ENCODE measurements at regions of chr7 and their contacts with region 1.

Region 1: DNA sequence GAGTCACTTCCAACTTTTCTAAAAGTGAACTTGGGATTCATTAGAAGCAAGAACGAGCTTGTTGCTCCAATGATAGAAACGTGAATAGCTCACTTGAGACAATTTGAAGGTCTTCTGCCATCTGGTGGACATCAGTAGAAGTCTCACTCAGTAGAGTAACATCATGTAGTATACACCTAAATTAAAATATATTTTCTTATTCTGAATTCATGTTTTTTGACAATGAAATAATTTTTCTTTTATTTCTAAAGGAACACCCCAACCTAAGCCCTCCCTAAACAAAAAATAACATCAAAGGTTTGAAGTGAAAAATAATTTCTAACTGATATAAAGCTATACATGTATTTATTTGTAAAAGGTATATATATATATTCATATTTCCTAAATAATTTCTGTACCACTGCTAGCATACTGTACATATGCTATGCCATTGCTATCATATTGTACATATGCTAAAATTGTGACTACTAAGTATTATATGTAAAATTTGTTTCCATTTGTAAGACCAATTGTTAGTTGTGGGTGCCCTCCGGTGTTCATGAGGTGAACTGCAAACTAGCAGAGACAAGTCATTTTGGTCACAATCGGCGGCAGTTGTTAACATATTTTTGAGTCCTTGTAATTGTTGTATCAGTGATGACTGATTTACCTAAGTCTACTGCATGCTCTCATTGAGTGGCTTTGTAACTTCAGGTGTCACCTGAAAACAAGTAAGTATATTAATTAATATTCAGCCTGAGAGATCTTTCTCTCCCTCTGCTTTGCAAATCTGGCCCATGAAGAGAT is 121.9 kb downstream of the PTPRZ1 start:
- DNase-seq: peak; percentile 69
- H3K4me3 ChIP-seq: no peak overlapping the region
- H3K27ac ChIP-seq: no peak overlapping the region
- H3K4me1 ChIP-seq: peaks cover 2% of the 10 kb centered on the region
- H3K27me3 ChIP-seq: peaks cover 3 to 5% of the 10 kb centered on the region in 2 experiments
- CTCF ChIP-seq: peak; percentile 45 to 59
- POLR2A ChIP-seq: no peak

Region 2: DNA sequence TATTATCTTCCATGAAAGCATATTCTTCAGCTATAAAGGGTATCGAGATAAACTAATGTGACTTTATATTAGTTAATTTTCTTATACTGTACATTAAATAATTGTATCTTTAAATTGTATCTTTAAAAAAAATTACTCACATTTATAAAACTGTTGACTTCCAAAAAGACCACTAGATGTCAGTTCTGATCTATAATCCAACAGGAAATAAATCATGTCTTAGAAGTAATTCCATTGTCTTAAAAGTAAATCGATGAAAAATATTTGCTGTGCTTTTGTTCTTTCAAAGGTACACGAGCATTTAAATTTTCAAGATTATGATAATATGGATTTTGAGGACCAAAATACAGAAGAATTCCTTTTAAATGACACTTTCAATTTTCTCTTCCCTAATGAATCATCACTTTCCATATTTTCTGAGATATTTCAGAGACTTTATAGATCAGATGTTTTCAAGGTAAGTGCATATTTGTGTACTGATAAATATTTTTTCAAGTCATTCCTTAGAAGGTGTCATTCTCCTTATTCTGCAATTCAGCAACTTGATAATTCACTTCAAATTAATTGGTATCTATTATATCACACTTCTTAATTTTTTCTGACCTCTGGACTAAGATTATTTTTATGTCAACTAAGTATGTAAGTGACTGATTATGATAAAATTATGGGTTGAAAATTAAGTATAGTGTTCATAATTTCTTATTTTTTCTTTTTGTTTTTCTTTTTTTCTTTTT is 867.9 kb before region 1 on chr7:
- CTCF ChIA-PET with region 1: interaction called, 60 read pairs
- POLR2A ChIA-PET with region 1: no interaction called
- dilution Hi-C with region 1: no loop called
- intact Hi-C with region 1: loop called (anchors 1 kb)
- DNase-seq: peak; percentile 38
- H3K4me3 ChIP-seq: no peak overlapping the region
- H3K27ac ChIP-seq: no peak overlapping the region
- H3K4me1 ChIP-seq: no peaks in the 10 kb centered on the region
- H3K27me3 ChIP-seq: no peaks in the 10 kb centered on the region
- CTCF ChIP-seq: no peak
- POLR2A ChIP-seq: no peak

Region 3: GRCh38 chr7:121366852-121367431 is 627.9 kb before region 1 on chr7:
- CTCF ChIA-PET with region 1: interaction called, 114 read pairs
- POLR2A ChIA-PET with region 1: no interaction called
- dilution Hi-C with region 1: no loop called
- intact Hi-C with region 1: loop called (anchors 1 kb)
- DNase-seq: peak; percentile 58
- H3K4me3 ChIP-seq: no peak overlapping the region
- H3K27ac ChIP-seq: no peak overlapping the region
- H3K4me1 ChIP-seq: peaks cover under 1% of the 10 kb centered on the region
- H3K27me3 ChIP-seq: no peaks in the 10 kb centered on the region
- CTCF ChIP-seq: peak; percentile 35 to 40
- POLR2A ChIP-seq: no peak

Region 4: DNA sequence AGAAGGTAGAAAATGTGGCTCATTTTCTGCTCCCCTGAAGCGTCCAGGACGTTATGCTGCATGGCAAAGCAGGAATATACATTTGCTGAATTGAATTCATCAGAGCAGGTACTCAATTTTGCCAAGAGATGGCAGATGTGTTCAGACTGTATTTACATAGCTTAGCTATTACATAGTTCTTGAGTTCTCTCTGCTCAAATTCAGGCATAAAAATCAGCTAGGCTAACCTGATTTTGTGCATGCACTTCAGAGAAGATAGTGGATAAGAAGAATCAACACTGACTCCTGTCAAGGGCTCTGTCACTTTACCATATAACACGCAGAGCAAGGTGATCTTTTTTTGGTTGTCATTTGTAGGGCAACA is 389.5 kb before region 1 on chr7:
- CTCF ChIA-PET with region 1: interaction called, 30 read pairs
- POLR2A ChIA-PET with region 1: no interaction called
- dilution Hi-C with region 1: no loop called
- intact Hi-C with region 1: no loop called
- DNase-seq: no peak
- H3K4me3 ChIP-seq: no peak overlapping the region
- H3K27ac ChIP-seq: no peak overlapping the region
- H3K4me1 ChIP-seq: no peaks in the 10 kb centered on the region
- H3K27me3 ChIP-seq: no peaks in the 10 kb centered on the region
- CTCF ChIP-seq: no peak
- POLR2A ChIP-seq: no peak

Region 5: DNA sequence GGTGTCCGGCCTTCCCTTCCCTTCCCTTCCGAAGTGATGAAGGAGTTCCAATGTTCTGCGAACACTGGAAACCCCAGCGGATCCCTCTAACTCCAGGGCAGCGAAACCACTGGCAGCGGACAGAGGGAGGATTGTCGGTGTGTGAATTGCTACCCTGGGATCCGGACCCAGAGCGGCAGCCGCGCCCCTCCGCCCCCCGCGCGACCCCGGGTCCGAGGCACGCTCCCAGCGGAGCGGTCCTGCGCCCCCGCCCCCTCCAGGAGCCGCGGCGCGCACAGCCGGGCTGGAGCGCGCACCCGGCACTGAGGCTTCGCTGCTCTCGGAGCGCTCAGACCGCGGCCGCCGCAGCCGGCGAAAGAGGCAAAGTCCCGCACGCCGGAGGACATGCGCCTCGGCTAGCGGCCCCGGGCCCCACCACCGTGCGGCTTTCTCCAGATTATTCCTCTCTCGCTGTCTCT is 122.0 kb before region 1 on chr7 and contains the start of gene PTPRZ1:
- CTCF ChIA-PET with region 1: interaction called, 31 read pairs
- POLR2A ChIA-PET with region 1: no interaction called
- dilution Hi-C with region 1: no loop called
- intact Hi-C with region 1: no loop called
- DNase-seq: no peak
- H3K4me3 ChIP-seq: peak within 1 kb of the TSS; percentile 43 to 81 (median 69)
- H3K27ac ChIP-seq: no peak within 1 kb of the TSS
- H3K4me1 ChIP-seq: peaks cover 9% of the 10 kb centered on the region
- H3K27me3 ChIP-seq: peaks cover 20 to 71% of the 10 kb centered on the region in 2 experiments
- CTCF ChIP-seq: no peak
- POLR2A ChIP-seq: no peak
- total RNA-seq, gene PTPRZ1: not detected in 2 replicates

Region 6: GRCh38 chr7:121961089-121961867 is 33.5 kb before region 1 on chr7:
- CTCF ChIA-PET with region 1: interaction called, 13 read pairs
- POLR2A ChIA-PET with region 1: no interaction called
- dilution Hi-C with region 1: no loop called
- intact Hi-C with region 1: no loop called
- DNase-seq: peak; percentile 34
- H3K4me3 ChIP-seq: no peak overlapping the region
- H3K27ac ChIP-seq: no peak overlapping the region
- H3K4me1 ChIP-seq: no peaks in the 10 kb centered on the region
- H3K27me3 ChIP-seq: no peaks in the 10 kb centered on the region
- CTCF ChIP-seq: no peak
- POLR2A ChIP-seq: no peak

Measured in endothelial cell of umbilical vein (primary cell).